Activated CD4-positive, alpha-beta T cell treated with anti-CD3 and anti-CD28 coated beads for 36 hours (primary cell): ENCODE measurements at regions of chr15 and their contacts with region 1.

Region 1: DNA sequence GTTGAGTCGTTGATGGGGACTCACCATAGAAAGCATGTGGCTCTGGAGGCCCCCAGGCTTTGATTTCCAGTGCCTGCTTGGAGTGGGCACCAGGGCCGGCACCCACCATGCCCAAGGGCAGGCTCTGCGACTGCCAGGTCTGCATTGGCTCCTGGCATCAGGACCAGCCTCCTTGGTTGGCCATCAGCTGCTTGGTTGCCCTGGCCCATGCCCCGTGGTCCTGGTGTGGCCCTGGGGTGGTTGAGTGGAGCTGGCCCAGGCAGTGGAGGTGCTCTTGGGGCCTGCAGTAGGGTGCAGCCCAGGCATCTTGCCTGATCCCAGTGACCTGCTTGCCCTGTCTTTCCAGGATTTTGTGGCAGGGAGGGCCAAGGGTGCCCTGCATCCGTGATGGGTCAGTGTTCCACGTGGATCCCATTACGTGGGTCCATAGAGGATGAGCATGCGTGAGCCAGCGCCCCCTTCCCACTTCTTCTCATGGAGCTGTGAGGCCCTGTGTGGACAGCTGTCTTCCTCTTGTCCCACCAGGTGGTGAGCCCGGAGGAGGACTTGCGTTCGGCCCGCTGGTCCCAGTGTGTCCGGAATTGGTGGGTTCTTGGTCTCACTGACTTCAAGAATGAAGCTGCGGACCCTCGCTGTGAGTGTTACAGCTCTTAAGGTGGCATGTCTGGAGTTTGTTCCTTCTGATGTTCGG is 187.0 kb downstream of the UBE3A start:
- DNase-seq: no peak
- ATAC-seq: no peak
- H3K4me3 Mint-ChIP-seq: no peak overlapping the region
- H3K27ac Mint-ChIP-seq: no peak overlapping the region
- H3K4me1 Mint-ChIP-seq: no peaks in the 10 kb centered on the region
- H3K27me3 Mint-ChIP-seq: no peaks in the 10 kb centered on the region

Region 2: DNA sequence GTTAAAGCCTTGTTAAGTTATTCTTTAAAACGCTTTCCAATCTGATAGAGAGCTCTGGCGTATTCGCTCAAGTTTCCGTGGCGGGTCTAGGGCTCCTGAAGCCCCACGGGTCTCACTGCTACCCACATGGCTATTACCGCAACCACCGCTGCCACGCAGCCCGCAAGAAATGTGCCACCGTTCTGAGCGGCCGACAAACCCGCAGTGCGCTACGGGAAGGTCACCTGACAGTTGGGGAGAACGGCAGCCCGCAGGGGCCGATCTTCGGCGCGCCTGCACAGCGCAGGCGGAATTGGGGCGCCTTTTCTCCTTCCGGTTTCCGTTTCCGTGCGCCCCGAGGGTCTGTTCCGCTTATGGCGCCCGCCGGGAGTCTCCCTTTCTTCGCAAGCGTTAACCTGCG is 373.7 kb before region 1 on chr15:
- CTCF ChIA-PET with region 1: no interaction called
- POLR2A ChIA-PET with region 1: no interaction called
- intact Hi-C with region 1: loop called in 1 of 2 experiments (anchors 10 kb)
- DNase-seq: peak; percentile 14
- ATAC-seq: no peak
- H3K4me3 Mint-ChIP-seq: no peak overlapping the region
- H3K27ac Mint-ChIP-seq: no peak overlapping the region
- H3K4me1 Mint-ChIP-seq: no peaks in the 10 kb centered on the region
- H3K27me3 Mint-ChIP-seq: peaks cover 2% of the 10 kb centered on the region

Region 3: GRCh38 chr15:25070357-25070963 is 181.4 kb before region 1 on chr15:
- CTCF ChIA-PET with region 1: no interaction called
- POLR2A ChIA-PET with region 1: no interaction called
- intact Hi-C with region 1: loop called in 1 of 2 experiments (anchors 10 kb)
- DNase-seq: no peak
- ATAC-seq: no peak
- H3K4me3 Mint-ChIP-seq: no peak overlapping the region
- H3K27ac Mint-ChIP-seq: no peak overlapping the region
- H3K4me1 Mint-ChIP-seq: no peaks in the 10 kb centered on the region
- H3K27me3 Mint-ChIP-seq: no peaks in the 10 kb centered on the region

Region 4: GRCh38 chr15:25226360-25226759 is 25.5 kb before region 1 on chr15:
- CTCF ChIA-PET with region 1: no interaction called
- POLR2A ChIA-PET with region 1: no interaction called
- intact Hi-C with region 1: no loop called
- DNase-seq: no peak
- ATAC-seq: no peak
- H3K4me3 Mint-ChIP-seq: no peak overlapping the region
- H3K27ac Mint-ChIP-seq: no peak overlapping the region
- H3K4me1 Mint-ChIP-seq: no peaks in the 10 kb centered on the region
- H3K27me3 Mint-ChIP-seq: no peaks in the 10 kb centered on the region

Region 5: GRCh38 chr15:25391971-25392721 is 140.3 kb after region 1 on chr15:
- CTCF ChIA-PET with region 1: no interaction called
- POLR2A ChIA-PET with region 1: no interaction called
- intact Hi-C with region 1: no loop called
- DNase-seq: no peak
- ATAC-seq: peak; percentile 85
- H3K4me3 Mint-ChIP-seq: no peak overlapping the region
- H3K27ac Mint-ChIP-seq: no peak overlapping the region
- H3K4me1 Mint-ChIP-seq: peaks cover 34% of the 10 kb centered on the region
- H3K27me3 Mint-ChIP-seq: no peaks in the 10 kb centered on the region

Region 6: DNA sequence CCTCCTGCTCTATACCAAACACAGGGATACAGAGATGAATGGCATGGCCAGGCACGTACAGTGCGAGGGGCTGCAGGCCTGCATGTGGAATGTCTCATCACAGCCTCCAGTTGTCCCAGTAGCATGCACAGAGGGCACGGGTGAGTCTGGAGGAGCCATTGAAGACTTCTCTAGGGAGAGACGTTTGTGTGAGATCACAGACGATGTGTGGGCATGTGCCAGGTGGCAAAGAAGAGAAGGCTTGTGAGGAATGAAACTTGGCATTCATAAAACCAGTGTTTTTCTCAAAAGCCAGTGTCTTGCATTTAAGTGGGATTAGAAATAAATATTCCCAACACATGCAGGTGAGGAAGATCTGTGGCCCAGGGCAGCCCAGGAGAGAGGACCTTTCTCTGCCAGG is 306.1 kb after region 1 on chr15:
- CTCF ChIA-PET with region 1: no interaction called
- POLR2A ChIA-PET with region 1: no interaction called
- intact Hi-C with region 1: loop called in 1 of 2 experiments (anchors 10 kb)
- DNase-seq: no peak
- ATAC-seq: no peak
- H3K4me3 Mint-ChIP-seq: no peak overlapping the region
- H3K27ac Mint-ChIP-seq: no peak overlapping the region
- H3K4me1 Mint-ChIP-seq: no peaks in the 10 kb centered on the region
- H3K27me3 Mint-ChIP-seq: no peaks in the 10 kb centered on the region